ENCODE measurements at regions of chr4 and their contacts with region 1.

Region 1: GRCh38 chr4:127598656-127599055 is 34.1 kb upstream of the INTU start:
- DNase-seq: no peak
- H3K4me3 ChIP-seq: no peak overlapping the region
- H3K27ac ChIP-seq: no peak overlapping the region
- H3K4me1 ChIP-seq: no peaks in the 10 kb centered on the region
- H3K27me3 ChIP-seq: peaks cover 0 to 1% (median 0%) of the 10 kb centered on the region in 4 experiments; a peak in 1 of 7 replicates
- CTCF ChIP-seq: no peak
- EP300 ChIP-seq: no peak
- POLR2A ChIP-seq: no peak
- RAD21 ChIP-seq: no peak

Region 2: DNA sequence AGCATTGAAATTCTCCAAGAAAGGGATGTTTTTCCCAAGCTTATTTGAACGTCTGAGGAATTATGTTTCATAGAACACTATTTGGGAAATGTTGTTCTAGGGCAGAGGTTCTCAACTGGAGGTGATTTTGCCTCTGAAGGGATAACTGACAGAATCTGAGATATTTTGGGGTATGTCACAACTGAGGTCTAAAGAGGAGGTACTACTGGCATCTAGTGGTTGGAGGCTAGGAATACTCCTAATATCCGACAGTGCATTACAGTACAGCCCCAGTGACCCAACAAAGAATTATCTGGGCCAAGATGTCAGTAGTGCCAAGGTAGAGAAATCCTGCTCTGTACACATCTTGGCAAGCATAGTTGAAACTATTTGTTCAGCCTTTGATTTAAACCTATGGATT is 189.9 kb after region 1 on chr4:
- CTCF ChIA-PET with region 1: interaction called, 10 read pairs
- POLR2A ChIA-PET with region 1: no interaction called
- DNase-seq: no peak
- H3K4me3 ChIP-seq: no peak overlapping the region
- H3K27ac ChIP-seq: no peak overlapping the region
- H3K4me1 ChIP-seq: peaks cover 0 to 2% (median 0%) of the 10 kb centered on the region in 4 experiments; a peak in 1 of 7 replicates
- H3K27me3 ChIP-seq: peaks cover 0 to 7% (median 3%) of the 10 kb centered on the region in 4 experiments; a peak in 5 of 7 replicates
- CTCF ChIP-seq: peak in 2 of 3 experiments; percentile 57 to 79; a peak in 3 of 4 replicates
- EP300 ChIP-seq: no peak
- POLR2A ChIP-seq: no peak
- RAD21 ChIP-seq: peak; percentile 75 to 79